ENCODE measurements at regions of chr16 and their contacts with region 1.

Region 1: DNA sequence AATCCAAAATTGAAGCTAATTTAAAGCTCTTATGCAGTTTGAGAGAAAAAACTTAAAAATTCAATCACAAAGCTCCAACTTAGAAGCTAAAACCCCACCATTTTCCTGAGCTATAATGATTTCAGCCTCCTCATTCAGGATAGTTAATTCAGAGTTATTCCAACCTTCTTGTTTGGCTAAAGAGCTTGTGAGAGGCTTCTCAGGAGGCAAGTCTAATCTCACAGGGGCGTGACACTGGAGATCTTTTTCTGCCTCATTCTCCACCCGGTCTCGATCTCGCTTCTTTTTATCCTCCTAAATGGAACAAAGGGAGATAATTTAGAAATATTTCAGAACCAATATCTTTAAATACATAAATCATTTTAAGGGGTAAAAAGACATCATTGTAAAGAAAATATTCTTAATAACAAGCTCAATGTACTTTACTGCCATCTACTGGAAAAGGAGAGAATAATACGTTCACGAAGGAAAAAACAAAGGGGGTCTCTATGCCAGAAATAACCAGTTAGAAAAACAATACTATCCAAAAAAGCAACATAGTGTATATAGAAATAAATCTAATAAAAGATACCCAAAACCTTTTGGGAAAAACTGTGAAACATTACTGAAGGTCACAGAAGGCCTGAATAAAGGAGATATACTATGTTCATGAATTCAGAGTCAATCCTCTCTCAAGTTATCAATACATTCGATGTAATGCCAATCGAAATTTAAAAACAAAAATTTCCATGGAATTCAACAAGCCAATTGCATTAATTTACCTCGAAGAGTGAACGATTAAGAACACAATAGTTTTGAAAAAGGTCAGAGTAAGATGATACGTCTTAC is 13.9 kb downstream of the BRD7 start:
- DNase-seq: peak; percentile 33
- H3K4me3 ChIP-seq: no peak overlapping the region
- H3K27ac ChIP-seq: no peak overlapping the region
- H3K4me1 ChIP-seq: no peaks in the 10 kb centered on the region
- H3K27me3 ChIP-seq: no peaks in the 10 kb centered on the region
- CTCF ChIP-seq: peak; percentile 25 to 37
- POLR2A ChIP-seq: no peak

Region 2: GRCh38 chr16:50235581-50235980 is 119.3 kb before region 1 on chr16:
- CTCF ChIA-PET with region 1: interaction called, 10 read pairs
- POLR2A ChIA-PET with region 1: no interaction called
- dilution Hi-C with region 1: no loop called
- intact Hi-C with region 1: no loop called
- DNase-seq: no peak
- H3K4me3 ChIP-seq: no peak overlapping the region
- H3K27ac ChIP-seq: no peak overlapping the region
- H3K4me1 ChIP-seq: no peaks in the 10 kb centered on the region
- H3K27me3 ChIP-seq: peaks cover 0 to 2% of the 10 kb centered on the region in 2 experiments
- CTCF ChIP-seq: no peak
- POLR2A ChIP-seq: no peak

Region 3: GRCh38 chr16:50313596-50314478 is 41.0 kb before region 1 on chr16:
- CTCF ChIA-PET with region 1: interaction called, 15 read pairs
- POLR2A ChIA-PET with region 1: no interaction called
- dilution Hi-C with region 1: no loop called
- intact Hi-C with region 1: no loop called
- DNase-seq: peak; percentile 51
- H3K4me3 ChIP-seq: no peak overlapping the region
- H3K27ac ChIP-seq: peak overlapping the region; percentile 46
- H3K4me1 ChIP-seq: peaks cover 12% of the 10 kb centered on the region
- H3K27me3 ChIP-seq: no peaks in the 10 kb centered on the region
- CTCF ChIP-seq: no peak
- POLR2A ChIP-seq: no peak

Region 4: DNA sequence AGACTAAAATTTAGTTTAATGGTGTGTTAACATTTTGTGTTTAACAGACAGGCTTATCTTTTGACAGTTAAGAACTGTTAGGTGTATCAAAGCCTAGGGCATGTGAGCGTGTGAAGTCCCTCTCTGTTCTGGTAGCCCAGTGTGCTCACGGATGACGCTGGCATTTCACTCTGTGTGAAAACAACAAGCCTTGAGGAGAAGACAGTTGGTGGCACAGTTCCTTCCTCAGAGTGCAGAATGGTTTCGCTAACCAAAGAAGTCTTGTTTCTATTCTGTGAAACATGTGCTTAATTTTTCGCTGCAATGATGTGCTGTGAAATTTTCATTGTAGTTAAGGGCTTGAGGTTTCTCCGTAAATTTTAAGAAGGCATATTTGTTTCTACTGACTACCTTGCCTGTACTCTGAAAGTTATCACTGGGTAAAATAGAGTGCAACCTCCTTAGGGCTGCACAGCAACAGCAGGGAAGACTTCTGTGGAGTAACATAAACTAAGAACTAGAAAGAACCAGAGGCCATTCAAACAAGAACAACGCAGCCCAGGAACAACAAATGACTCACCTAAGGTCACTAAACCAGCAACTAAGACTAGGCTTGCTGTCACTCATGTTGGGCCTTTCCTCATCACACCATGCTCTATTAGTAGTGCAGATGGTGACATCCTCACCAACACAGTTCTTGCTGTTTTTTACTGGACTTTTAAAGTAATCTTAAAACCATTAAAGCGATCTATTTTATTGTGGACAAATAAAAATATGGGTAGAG is 19.5 kb before region 1 on chr16:
- CTCF ChIA-PET with region 1: interaction called, 10 read pairs
- POLR2A ChIA-PET with region 1: no interaction called
- dilution Hi-C with region 1: no loop called
- intact Hi-C with region 1: no loop called
- DNase-seq: no peak
- H3K4me3 ChIP-seq: no peak overlapping the region
- H3K27ac ChIP-seq: no peak overlapping the region
- H3K4me1 ChIP-seq: no peaks in the 10 kb centered on the region
- H3K27me3 ChIP-seq: no peaks in the 10 kb centered on the region
- CTCF ChIP-seq: no peak
- POLR2A ChIP-seq: no peak

Region 5: DNA sequence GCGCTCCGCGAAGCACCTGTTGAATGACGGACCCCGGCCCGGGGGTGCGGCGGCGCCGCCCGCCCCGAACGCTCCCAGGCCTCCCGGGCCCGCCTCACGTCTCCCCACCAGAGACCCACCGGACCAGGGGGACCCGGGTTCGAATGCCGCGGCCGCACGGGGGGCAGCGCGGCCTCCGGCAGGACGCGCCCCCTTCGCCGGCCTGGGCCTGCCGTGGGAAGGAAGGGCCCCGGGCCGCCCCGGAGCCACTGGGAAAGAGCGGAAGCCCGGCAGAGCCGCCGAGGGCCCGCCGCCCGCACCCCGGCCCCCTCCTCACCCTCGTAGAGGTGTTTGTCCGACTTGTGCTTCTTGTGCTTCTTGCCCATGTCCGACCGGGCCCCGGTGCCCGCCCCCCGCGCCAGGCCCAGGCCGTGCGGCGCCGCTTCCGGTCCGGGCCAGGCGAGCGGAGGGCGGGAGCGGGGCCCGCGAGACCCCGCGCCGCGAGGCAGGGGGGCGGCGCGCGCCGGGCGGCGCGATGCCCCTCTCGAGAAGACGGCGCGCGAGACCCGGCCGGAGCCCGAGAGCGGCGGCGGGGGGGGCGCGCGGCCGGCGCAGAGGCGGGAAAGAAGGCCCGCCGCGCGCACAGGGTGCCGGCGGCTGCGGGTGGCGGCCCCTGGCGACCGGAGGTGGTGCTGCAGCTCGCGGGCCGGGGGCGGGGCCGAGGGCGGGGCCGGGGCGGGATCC is 13.7 kb after region 1 on chr16 and contains the start of gene BRD7:
- CTCF ChIA-PET with region 1: interaction called, 22 read pairs
- POLR2A ChIA-PET with region 1: interaction called, 6 read pairs
- dilution Hi-C with region 1: no loop called
- intact Hi-C with region 1: no loop called
- DNase-seq: peak; percentile 39
- H3K4me3 ChIP-seq: peak within 1 kb of the TSS; percentile 46 to 96 (median 87)
- H3K27ac ChIP-seq: peak within 1 kb of the TSS; percentile 63
- H3K4me1 ChIP-seq: peaks cover 8% of the 10 kb centered on the region
- H3K27me3 ChIP-seq: no peaks in the 10 kb centered on the region
- CTCF ChIP-seq: peak in 1 of 2 donors; percentile 48
- POLR2A ChIP-seq: no peak
- total RNA-seq, gene BRD7: 69.1 and 78.0 TPM in 2 replicates